Sigmoid colon (tissue), 7 donors: ENCODE measurements at regions of chr19 and their contacts with region 1.

Region 1: DNA sequence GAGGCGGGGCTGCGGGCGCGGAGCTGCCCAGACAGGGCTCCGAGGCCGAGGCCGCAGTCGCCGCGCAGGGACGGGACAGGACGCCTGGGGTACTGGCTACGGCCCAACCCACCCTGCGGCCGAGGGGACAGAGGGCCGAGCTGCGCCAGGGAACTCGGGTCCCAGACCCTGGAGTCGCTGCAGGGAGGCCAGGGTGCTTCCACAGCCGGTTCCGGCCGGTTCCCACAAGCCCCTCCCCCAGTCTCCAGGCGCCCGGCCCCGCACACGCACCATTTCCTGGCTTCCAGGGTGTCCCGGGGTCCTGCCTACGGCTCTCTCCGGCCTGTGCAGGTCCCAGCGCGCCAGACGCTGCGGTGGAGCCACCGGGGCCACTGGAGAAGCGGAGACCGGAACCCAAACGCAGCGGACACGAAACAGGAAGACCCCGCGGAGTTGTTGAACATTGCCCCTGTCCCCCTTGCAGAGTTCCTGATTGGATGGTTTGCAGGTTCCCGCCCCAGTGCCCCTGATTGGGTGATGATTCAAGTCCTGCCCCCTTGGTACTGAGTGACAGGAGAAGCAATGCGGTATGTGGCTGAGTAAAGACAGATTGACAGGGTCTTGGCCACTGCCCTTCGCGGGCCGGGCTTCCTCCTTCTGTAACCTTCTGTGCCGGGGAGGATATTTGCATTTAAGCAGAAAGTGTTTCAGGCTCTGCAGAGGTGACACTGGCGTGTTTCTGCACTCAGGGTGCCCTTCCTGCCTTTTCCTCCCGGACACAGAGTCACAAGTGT is at the start of gene ZNF564:
- DNase-seq: peak; percentile 98
- H3K4me3 ChIP-seq: peak within 1 kb of the TSS; percentile 81 to 94 (median 86)
- H3K27ac ChIP-seq: peak within 1 kb of the TSS; percentile 95 to 98 (median 97)
- H3K4me1 ChIP-seq: peaks cover 0 to 42% (median 33%) of the 10 kb centered on the region in 4 donors
- H3K27me3 ChIP-seq: no peaks in the 10 kb centered on the region
- CTCF ChIP-seq: no peak
- EP300 ChIP-seq: peak in 1 of 4 donors; percentile 49
- POLR2A ChIP-seq: peak; percentile 6 to 82
- total RNA-seq, gene ZNF564: 11.7 to 17.8 (median 16.4) TPM

Region 2: GRCh38 chr19:12400633-12401502 is 150.4 kb before region 1 on chr19 and contains the start of gene ZNF799:
- intact Hi-C with region 1: loop called (anchors 2 kb)
- DNase-seq: peak; percentile 99
- H3K4me3 ChIP-seq: peak within 1 kb of the TSS; percentile 58 to 79 (median 66)
- H3K27ac ChIP-seq: peak within 1 kb of the TSS; percentile 84 to 92 (median 88)
- H3K4me1 ChIP-seq: peaks cover 0 to 9% (median 5%) of the 10 kb centered on the region in 4 donors
- H3K27me3 ChIP-seq: no peaks in the 10 kb centered on the region
- CTCF ChIP-seq: no peak
- EP300 ChIP-seq: peak in 1 of 4 donors; percentile 57
- POLR2A ChIP-seq: peak in 1 of 2 donors; percentile 79
- total RNA-seq, gene ZNF799: 4.6 to 7.4 (median 5.8) TPM

Region 3: DNA sequence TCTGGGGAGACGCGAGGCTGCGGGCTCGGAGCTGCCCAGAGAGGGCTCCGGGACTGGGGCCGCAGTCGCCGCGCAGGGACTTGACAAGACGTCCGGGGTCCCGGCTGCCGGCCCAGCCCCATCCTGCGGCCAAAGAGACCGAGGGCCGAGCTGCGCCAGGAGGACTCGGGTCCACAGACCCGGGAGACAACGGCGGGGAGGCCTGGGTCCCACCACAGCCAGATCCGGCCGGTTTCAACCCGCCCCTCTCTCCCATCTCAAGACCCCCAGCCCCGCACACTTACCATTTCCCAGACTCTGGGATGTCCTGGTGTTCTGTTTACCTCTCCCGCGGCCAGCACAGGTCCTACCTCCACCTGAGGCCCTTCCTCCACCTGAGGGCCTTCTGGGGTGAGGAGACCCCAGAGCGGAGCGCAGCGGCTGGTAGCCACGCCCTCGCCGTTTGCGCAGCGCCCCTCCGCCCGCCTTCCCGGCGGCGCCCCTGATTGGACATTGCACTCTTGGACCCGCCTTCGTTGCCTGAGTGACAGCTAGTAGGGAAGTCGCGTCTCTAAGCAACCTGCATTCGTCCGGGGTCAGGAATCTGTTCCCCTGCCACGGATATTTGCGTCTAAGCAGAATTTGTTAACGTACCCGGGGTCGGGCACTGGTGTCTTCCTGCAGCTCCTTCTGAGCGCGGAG is 66.7 kb before region 1 on chr19 and contains the start of gene ZNF709:
- intact Hi-C with region 1: loop called (anchors 2 kb)
- DNase-seq: peak; percentile 94
- H3K4me3 ChIP-seq: peak within 1 kb of the TSS; percentile 78 to 97 (median 83)
- H3K27ac ChIP-seq: peak within 1 kb of the TSS; percentile 70 to 88 (median 80)
- H3K4me1 ChIP-seq: peaks cover 0 to 22% (median 9%) of the 10 kb centered on the region in 4 donors
- H3K27me3 ChIP-seq: no peaks in the 10 kb centered on the region
- CTCF ChIP-seq: no peak
- EP300 ChIP-seq: no peak
- POLR2A ChIP-seq: peak in 1 of 2 donors; percentile 56
- total RNA-seq, gene ZNF709: 2.4 to 8.3 (median 3.5) TPM

Region 4: DNA sequence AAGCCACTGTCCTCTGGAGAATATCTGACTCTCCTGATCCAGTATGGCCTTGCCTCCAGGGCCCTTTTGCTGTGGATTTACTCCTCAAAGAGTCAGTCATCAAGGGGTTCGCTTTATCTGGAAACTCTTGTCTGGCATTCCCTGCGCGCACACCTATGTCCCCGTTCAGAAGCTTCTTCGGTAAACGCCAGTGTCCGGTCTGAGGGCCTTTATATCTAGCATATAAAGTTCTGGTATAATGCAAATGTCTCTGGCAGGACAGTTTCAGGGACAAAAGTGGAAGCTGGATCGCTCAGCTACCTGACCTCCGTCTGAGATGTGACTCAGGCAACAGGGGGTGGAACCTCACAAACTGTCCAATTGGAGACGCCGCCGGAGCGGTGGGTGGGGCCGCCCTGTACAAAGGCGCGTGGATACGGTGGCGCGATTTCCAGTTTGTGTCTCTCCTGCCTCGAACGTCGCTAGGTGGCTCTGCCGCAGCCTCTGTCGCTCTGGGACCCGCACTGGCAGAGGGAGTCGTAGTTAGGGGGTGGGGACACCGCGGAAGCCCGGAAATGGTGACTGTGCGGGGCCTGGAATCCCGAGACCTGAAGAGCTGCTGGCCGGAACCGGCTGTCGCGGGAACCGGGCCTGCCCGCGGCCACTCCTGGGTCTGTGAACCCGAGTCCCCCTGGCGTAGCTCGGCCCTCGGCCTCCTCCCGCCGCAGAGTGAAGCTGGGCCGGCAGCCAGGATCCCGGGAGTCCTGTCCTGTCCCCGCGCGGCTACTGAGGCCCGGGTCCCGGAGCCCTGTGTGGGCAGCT is 56.0 kb before region 1 on chr19:
- intact Hi-C with region 1: loop called (anchors 2 kb)
- DNase-seq: peak; percentile 97
- H3K4me3 ChIP-seq: peak overlapping the region; percentile 46 to 68 (median 58)
- H3K27ac ChIP-seq: peak overlapping the region; percentile 64 to 85 (median 76)
- H3K4me1 ChIP-seq: peaks cover 0 to 15% (median 7%) of the 10 kb centered on the region in 4 donors
- H3K27me3 ChIP-seq: no peaks in the 10 kb centered on the region
- CTCF ChIP-seq: peak in 1 of 4 experiments; percentile 8
- EP300 ChIP-seq: no peak
- POLR2A ChIP-seq: peak in 1 of 2 donors; percentile 24

Region 5: DNA sequence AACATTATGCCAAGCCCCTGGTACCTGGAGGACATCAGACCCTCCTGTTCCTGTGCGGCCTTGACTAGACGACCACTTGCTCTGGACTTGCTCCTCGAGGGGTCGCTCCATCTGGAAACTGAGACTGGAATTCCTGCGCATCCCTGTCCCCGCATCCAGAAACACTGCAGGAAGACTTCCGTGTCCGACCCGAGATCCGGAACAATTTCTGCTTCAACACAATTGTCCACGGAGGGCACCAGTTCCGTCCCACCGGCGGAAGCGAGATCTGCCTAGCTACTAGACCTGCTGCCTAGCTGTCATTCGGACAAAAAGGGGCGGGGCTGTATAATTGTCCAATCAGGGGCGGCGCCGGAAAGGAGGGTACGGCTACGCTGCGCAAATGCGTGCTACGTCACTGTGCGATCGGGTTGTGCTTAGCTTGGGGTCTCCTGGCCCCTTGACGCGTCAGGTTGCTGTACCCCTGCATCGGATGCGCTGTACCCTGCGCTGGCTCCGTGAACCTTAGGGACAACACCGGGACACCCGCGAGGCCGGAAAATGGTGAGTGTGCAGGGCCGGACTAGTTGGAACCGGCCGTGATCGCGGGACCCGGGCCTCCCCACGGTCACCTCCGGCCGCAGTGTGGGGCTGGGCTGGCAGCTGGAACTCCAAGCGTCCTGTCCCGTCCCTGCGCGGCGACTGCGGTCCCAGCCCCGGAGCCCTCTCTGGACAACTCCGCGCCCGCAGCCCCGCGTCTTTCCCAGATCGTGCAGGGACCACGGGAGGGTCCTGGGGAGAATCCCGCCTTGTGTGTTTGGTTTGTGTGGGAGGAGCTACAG is 59.5 kb after region 1 on chr19 and contains the starts of genes ZNF490 and ZNF791:
- intact Hi-C with region 1: loop called (anchors 2 kb)
- DNase-seq: peak; percentile 99
- H3K4me3 ChIP-seq: peak within 1 kb of the TSS; percentile 77 to 99 (median 88)
- H3K27ac ChIP-seq: peak within 1 kb of the TSS; percentile 95 to 100 (median 98)
- H3K4me1 ChIP-seq: peaks cover 0 to 39% (median 33%) of the 10 kb centered on the region in 4 donors
- H3K27me3 ChIP-seq: no peaks in the 10 kb centered on the region
- CTCF ChIP-seq: no peak
- EP300 ChIP-seq: no peak
- POLR2A ChIP-seq: peak; percentile 88 to 93
- total RNA-seq, gene ZNF490: 4.3 to 7.8 (median 5.5) TPM
- total RNA-seq, gene ZNF791: 16.6 to 27.6 (median 22.3) TPM

Region 6: DNA sequence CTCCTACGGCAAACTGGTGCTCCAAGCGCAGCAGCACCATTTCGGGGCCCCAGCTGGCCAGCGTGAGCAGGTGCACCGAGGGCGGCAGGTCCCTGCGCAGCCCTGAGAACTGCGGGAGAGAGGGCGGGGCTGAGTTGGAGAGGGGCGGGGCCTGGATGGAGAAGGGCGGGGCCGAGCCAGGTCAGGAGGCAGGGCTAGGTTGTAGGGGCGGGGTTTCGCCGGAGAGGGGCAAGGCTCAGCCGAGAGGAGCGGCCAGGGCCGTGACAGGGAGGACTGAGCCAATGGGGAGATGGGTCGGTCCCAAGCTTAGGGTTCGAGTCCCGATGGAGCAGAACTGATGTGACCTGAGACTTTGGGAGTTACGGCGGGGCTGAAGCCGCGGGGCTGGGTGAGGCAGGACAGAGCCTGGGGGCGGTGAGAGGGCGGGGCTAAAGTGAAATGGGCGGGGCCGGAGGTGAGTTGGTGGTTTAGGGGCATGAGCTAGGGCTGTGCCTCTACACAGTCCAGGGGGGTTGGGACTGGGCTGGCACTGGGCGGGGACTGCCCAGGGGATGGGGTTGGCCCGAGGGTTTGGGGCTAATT is 96.3 kb after region 1 on chr19:
- intact Hi-C with region 1: no loop called
- DNase-seq: peak; percentile 83
- H3K4me3 ChIP-seq: peak overlapping the region; percentile 8 to 46 (median 37)
- H3K27ac ChIP-seq: peak overlapping the region in 2 of 4 donors; percentile 1 to 11
- H3K4me1 ChIP-seq: peaks cover 0 to 17% (median 15%) of the 10 kb centered on the region in 4 donors
- H3K27me3 ChIP-seq: no peaks in the 10 kb centered on the region
- CTCF ChIP-seq: no peak
- EP300 ChIP-seq: no peak
- POLR2A ChIP-seq: no peak